RWPE1 (cell line): ENCODE measurements at regions of chr13 and their contacts with region 1.

Region 1: DNA sequence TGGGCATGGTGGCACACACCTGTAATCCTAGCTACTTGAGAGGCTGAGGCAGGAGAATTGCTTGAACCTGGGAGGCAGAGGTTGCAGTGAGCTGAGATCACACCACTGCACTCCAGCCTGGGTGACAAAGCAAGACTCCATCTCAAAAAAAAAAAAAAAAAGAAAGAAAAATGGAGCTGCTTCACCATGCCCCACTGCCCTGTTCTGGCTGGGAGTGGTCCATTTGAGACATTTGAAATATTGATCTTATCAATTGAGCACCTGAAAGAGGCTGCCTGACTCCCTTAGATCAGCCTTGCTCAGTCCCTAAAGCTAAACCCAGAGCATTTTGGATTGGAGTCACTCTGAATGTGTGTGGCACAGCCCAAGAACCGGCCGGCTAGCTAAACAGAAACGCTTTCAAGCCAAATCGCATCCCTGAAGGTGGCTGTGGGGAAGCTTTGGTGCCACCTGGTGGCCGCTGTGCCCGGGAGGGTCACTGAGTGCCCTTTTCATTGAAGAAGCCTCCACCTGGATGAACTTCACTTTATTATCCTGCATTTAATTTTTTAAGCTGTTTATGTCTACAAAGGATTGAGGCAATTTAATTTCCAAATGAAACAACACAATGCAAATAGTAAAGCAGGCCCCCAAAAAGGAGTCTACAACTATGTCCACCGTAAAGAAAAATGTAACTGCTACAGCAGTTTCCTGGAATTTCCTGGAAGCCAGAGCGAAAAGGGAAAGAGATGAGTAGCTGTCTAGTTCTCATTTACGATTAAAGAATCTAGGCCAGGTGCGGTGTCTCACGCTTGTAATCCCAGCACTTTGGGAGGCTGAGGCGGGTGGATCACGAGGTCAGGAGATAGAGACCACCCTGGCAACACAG is 53.1 kb upstream of the SERPINE3 start:
- DNase-seq: peak; percentile 68
- H3K27ac ChIP-seq: no peak overlapping the region
- CTCF ChIP-seq: peak; percentile 94

Region 2: DNA sequence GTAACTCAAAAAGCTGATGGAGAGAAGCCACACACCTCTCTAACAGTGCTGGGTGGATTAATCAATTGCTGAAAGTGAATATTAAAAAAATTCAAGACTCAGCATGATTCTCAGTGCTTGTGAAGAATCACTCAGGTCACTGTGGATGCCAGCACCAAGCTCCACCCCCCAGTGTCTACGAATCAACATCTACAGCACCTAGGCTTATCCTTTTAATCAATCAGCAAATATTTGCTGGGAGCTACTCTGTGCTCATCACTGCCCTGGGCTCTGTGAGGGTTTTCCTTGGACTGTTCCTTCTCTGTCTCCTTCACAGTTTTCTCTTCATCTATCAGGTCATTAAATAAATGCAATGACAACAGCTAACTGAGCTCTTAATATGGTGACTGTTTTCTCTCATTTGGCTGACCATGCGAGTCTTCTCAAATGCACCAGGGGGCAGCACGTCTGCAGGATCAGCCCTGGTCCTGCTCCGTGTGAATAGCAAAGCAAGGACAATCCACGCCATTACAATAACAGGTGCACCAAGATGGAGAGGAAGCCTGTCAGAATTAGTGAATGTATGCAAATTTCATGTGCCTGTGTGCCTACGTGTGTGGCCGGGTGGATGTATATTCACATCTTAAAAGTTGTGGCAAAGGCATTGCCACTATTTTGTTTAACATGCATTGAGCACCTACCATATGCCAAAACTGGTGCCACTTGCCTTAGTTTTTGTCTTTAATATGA is 160.7 kb before region 1 on chr13:
- CTCF ChIA-PET with region 1: interaction called, 19 read pairs
- POLR2A ChIA-PET with region 1: no interaction called
- DNase-seq: peak; percentile 45
- H3K27ac ChIP-seq: no peak overlapping the region
- CTCF ChIP-seq: peak; percentile 67

Region 3: DNA sequence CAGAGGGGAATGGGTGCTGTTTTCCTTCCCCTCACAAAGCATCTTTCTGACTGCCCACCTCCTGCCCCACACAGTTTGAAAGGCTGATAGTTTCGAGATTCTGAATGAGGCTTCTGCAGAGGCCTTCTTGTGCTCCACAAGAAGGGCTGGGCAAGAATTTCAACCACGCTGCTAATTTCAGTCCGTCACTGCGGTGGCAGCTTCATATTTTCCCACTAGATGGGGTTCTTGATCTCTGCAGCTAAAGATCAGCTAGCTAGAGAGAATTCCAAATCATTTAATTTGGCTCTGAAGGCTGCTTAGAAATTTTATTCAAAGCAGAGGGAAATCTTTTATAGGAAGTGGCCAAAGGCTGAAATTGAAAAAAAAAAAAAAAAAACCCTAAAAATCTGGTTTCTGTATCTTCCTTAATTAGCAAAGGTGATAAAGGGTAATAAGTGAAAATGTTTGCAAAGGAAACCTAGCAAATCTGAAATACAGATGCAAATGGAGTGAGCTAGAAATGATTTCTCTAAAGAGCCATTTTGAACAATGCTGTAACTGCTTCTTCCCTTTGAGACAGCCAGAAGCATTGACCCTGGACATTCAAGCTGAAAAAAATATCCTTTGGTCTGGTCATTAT is 137.3 kb before region 1 on chr13:
- CTCF ChIA-PET with region 1: interaction called, 15 read pairs
- POLR2A ChIA-PET with region 1: no interaction called
- DNase-seq: peak; percentile 26
- H3K27ac ChIP-seq: no peak overlapping the region
- CTCF ChIP-seq: peak; percentile 57